ENCODE measurements at regions of chr6 and their contacts with region 1.

Region 1: GRCh38 chr6:44456070-44456965 is 68.8 kb downstream of the CDC5L start:
- DNase-seq: no peak
- ATAC-seq: no peak
- H3K4me3 ChIP-seq: no peak overlapping the region
- H3K27ac ChIP-seq: no peak overlapping the region
- H3K4me1 ChIP-seq: no peaks in the 10 kb centered on the region
- H3K27me3 ChIP-seq: no peaks in the 10 kb centered on the region

Region 2: GRCh38 chr6:44401138-44401537 is 55.2 kb before region 1 on chr6:
- intact Hi-C with region 1: no loop called
- DNase-seq: no peak
- ATAC-seq: no peak
- H3K4me3 ChIP-seq: no peak overlapping the region
- H3K27ac ChIP-seq: peak overlapping the region in 1 of 2 donors; percentile 10
- H3K4me1 ChIP-seq: peaks cover 0 to 4% of the 10 kb centered on the region in 2 donors
- H3K27me3 ChIP-seq: no peaks in the 10 kb centered on the region

Region 3: GRCh38 chr6:44431118-44431725 is 25.1 kb before region 1 on chr6:
- intact Hi-C with region 1: loop called in 1 of 2 experiments (anchors 2 kb)
- DNase-seq: no peak
- ATAC-seq: peak; percentile 79
- H3K4me3 ChIP-seq: no peak overlapping the region
- H3K27ac ChIP-seq: no peak overlapping the region
- H3K4me1 ChIP-seq: peaks cover 0 to 3% of the 10 kb centered on the region in 2 donors
- H3K27me3 ChIP-seq: no peaks in the 10 kb centered on the region

Measured in aorta (tissue), 5 donors.